ENCODE measurements at regions of chr2 and their contacts with region 1.

Region 1: DNA sequence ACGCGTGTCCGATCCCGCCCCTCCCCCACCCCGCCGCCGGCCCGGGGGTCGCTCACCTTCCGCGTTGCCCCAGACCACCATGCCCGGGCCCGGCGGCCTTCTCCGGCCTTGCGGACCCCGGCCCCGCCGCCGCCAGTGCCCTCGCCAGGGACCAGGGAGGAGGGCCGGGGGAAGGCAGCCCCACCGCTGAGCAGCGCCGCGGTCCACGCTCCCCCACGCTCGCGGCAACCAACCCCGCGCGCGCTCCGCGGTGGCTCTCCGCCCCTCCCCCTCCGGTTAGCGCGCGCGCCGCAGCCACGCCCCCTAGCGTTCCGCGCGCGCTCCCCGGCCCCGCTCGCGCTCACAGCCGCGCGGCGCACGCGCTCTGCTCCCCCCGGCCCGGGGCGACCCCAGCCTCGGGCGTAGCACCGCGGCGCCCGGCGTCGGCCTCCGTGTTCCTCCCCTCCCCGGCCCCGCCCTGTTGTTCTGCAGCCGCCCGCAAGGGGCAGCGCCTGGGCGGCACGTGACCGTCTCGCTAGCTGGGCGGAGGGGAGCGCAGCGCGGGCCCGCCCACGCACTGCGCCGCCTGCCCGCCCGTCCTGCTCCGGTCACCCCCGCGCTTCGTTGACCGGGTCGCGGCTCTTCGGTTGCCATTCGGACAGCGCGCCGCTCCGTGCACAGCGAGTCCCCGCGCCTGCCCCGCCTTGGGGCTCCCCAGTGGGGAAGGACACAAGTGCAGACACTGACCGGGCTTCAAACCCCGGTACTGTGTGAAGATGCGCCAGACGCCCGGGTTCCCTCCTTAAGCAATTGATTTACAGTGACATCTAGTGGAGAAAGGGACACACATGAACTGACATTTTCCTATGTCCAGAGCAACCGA is at the start of gene REV1:
- DNase-seq: peak; percentile 78 to 93 (median 90)
- H3K4me3 ChIP-seq: peak within 1 kb of the TSS; percentile 61 to 96 (median 86)
- H3K27ac ChIP-seq: peak within 1 kb of the TSS; percentile 86 to 100 (median 96)
- H3K27me3 ChIP-seq: no peaks in the 10 kb centered on the region
- CTCF ChIP-seq: peak; percentile 59 to 94 (median 82)
- total RNA-seq, gene REV1: 47.8 to 91.4 (median 67.5) TPM

Region 2: DNA sequence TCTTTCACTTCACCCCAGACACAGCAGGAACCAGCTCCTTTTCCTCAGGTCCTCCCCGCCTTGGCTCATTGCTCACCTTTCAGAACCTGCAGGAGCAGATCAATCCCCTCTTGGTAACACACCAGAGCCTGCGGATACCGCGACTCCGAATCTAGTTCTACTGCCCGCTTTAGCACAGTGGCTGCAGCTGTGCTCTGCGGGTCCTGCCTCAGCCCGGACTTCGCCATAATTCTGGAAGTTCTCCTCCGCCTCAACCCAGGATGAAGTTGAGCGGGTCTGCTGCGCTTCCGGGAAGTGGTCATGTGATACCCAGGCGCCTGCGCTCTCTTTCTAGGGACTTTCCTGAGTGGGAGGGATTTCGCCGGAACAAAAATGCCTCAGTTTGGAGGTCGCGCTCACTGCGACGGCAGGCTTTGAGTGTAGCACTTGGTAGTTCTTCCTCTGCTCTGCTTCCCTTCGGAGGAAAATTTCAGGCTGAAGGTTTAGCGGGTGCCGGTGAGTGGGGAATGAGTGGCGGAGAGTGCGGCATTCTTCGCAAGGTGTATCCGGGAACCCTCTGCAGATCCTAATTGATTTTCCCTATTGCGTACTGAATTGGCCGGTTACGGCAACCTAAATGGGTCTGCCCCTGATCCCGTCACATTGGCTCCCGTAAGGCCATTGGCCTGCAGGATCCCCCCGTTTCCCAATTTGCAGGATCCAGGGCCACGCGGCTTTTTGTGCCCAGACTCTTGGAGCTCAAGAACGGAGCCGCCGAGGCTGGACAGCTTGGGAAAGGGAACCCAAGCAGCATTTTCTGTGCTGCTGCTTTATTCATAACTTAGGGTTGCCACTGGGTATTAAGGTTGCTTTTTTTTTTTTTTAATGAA is 309.0 kb before region 1 on chr2 and contains the starts of genes MITD1 and MRPL30:
- intact Hi-C with region 1: loop called (anchors 2 to 5 kb)
- DNase-seq: peak; percentile 91 to 96 (median 94)
- H3K4me3 ChIP-seq: peak within 1 kb of the TSS; percentile 54 to 99 (median 88)
- H3K27ac ChIP-seq: peak within 1 kb of the TSS in 58 of 59 donors; percentile 17 to 92 (median 81)
- H3K27me3 ChIP-seq: no peaks in the 10 kb centered on the region
- CTCF ChIP-seq: peak in 42 of 56 donors; percentile 3 to 60 (median 39)
- total RNA-seq, gene MITD1: 7.5 to 42.1 (median 22.0) TPM
- total RNA-seq, gene MRPL30: 18.6 to 44.3 (median 31.2) TPM

Region 3: GRCh38 chr2:99403524-99403923 is 86.5 kb before region 1 on chr2:
- intact Hi-C with region 1: loop called in 1 of 2 experiments (anchors 10 kb)
- DNase-seq: no peak
- H3K4me3 ChIP-seq: no peak overlapping the region
- H3K27ac ChIP-seq: peak overlapping the region in 30 of 59 donors; percentile 5 to 57 (median 30)
- H3K27me3 ChIP-seq: no peaks in the 10 kb centered on the region
- CTCF ChIP-seq: no peak

Region 4: DNA sequence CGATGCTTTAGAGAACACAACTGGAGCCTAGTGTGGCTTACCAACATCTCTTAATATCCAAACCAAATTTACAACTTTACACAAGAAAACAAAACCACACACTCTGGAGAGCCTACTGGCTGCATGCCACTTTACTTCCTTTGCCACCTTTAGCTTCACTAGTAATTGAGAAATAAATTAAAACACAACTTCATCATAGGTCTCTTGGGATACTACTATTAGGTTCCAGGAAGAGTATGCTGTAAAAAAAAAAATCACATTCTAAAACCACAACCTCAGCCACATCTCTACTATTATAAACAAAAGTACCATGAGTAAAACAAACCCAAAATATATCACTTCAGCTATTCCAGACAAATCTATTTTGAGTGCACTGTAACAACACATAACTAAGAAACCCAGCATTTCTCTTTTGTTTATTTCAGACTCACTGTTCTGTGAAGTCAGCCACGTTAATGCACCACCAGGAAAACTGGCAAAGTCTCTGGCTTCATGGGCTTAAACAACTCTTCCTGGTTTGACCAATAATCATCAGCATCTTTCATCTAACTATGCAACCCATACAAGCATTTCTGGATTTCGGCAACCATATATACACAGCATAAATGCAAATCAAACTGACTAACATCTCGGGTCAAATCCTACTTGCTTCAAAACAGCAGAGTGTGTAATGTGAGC is 59.2 kb before region 1 on chr2:
- intact Hi-C with region 1: loop called in 1 of 2 experiments (anchors 10 kb)
- DNase-seq: no peak
- H3K4me3 ChIP-seq: no peak overlapping the region
- H3K27ac ChIP-seq: peak overlapping the region in 8 of 59 donors; percentile 6 to 46 (median 24)
- H3K27me3 ChIP-seq: no peaks in the 10 kb centered on the region
- CTCF ChIP-seq: no peak

Region 5: GRCh38 chr2:99524056-99524455 is 34.1 kb after region 1 on chr2:
- intact Hi-C with region 1: no loop called
- DNase-seq: no peak
- H3K4me3 ChIP-seq: no peak overlapping the region
- H3K27ac ChIP-seq: no peak overlapping the region
- H3K27me3 ChIP-seq: peaks cover 0 to 5% (median 0%) of the 10 kb centered on the region in 45 donors
- CTCF ChIP-seq: no peak